Body of pancreas (tissue), 4 donors: ENCODE measurements at regions of chr20 and their contacts with region 1.

Region 1: DNA sequence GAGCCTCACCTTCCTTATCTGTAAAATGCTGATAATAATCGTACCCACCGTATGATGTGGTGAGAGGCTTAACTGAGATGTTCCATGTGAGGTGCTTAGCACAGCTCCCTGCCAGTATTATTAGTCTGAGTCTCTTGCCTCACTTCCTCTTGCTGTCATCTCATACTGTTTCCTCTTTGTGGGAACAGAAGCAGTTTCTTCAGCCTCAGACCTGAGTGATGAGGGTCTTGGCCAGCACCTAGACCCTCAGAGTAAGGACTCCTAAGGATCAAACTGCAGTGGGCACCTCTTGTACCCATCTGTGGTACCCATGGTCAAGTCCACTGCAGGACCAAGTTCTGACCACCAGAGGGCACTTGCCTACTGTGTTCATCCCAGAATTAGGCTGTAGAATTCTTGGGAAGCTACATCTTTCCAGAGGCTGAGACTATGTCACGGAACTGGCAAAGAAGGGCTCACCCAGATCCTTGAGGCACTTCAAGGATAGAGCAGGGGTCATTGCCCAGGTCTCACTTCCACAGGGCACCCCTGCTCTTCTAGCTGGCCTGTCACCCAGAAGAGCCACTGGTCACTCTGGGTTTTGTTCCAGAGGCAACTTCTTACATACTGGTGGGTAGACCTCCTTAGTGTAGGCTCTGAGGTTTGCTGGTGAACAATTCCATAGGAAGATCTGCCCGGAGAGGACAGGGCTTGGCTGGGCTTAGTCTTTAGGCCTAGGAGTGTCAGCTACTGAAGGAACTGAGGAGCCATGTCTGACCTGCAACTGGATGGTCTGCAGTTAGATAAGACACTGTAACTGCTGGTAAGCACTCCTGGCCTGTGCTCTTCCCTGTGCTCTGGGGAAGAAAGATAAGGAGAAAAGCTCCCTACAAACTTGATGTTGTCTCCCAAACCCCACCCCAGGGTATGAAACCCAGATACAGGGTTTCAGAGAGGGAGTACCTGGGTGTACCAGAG is 20.6 kb upstream of the SGK2 start:
- DNase-seq: peak; percentile 75 to 87 (median 79)
- ATAC-seq: peak; percentile 70
- H3K4me3 ChIP-seq: no peak overlapping the region
- H3K27ac ChIP-seq: no peak overlapping the region
- H3K4me1 ChIP-seq: peaks cover 15% of the 10 kb centered on the region
- H3K27me3 ChIP-seq: no peaks in the 10 kb centered on the region
- CTCF ChIP-seq: peak; percentile 83 to 89 (median 86)
- POLR2A ChIP-seq: no peak

Region 2: GRCh38 chr20:43590392-43591323 is 52.5 kb after region 1 on chr20 and contains the start of gene IFT52:
- intact Hi-C with region 1: loop called (anchors 10 kb)
- DNase-seq: peak; percentile 93 to 96 (median 94)
- ATAC-seq: peak; percentile 97
- H3K4me3 ChIP-seq: peak within 1 kb of the TSS; percentile 88 to 96
- H3K27ac ChIP-seq: peak within 1 kb of the TSS; percentile 63 to 93 (median 82)
- H3K4me1 ChIP-seq: peaks cover 50% of the 10 kb centered on the region
- H3K27me3 ChIP-seq: no peaks in the 10 kb centered on the region
- CTCF ChIP-seq: peak in 1 of 7 experiments; percentile 20
- POLR2A ChIP-seq: peak; percentile 20 to 69 (median 65)
- total RNA-seq, gene IFT52: 16.3 to 23.4 TPM

Region 3: DNA sequence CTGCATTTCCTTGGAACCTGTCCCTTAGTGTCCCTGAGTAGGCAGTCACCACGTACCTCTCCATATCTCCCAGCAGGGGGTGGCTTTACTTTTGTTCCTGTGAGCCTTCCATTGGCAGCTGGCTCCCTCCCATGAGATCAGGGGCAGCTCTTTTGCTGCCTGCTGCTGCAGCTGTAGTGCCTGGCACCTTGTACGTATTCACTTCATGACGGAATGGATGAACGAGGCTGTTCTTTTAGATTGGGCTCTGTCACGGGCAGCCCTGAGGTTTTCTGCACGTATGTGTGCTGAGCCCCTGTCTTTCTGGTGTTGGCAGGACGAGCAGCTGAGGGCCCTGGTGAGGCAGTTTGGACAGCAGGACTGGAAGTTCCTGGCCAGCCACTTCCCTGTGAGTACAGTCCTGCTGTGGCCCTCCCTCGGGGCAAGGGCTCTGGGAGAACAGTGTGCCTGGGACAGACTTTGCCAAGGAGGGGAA is 143.3 kb after region 1 on chr20:
- intact Hi-C with region 1: loop called (anchors 10 kb)
- DNase-seq: peak; percentile 81 to 91 (median 88)
- ATAC-seq: peak; percentile 97
- H3K4me3 ChIP-seq: peak overlapping the region in 1 of 2 donors; percentile 1
- H3K27ac ChIP-seq: peak overlapping the region; percentile 89 to 94 (median 91)
- H3K4me1 ChIP-seq: peaks cover 28% of the 10 kb centered on the region
- H3K27me3 ChIP-seq: no peaks in the 10 kb centered on the region
- CTCF ChIP-seq: peak in 6 of 7 experiments; percentile 14 to 72 (median 65)
- POLR2A ChIP-seq: peak; percentile 50 to 83 (median 79)